ENCODE measurements at regions of chr2 and their contacts with region 1.

Region 1: GRCh38 chr2:20411361-20411894 is 35.4 kb upstream of the RHOB start:
- DNase-seq: peak; percentile 77
- ATAC-seq: peak; percentile 100
- H3K4me3 ChIP-seq: no peak overlapping the region
- H3K27ac ChIP-seq: no peak overlapping the region
- H3K4me1 ChIP-seq: no peaks in the 10 kb centered on the region
- H3K27me3 ChIP-seq: no peaks in the 10 kb centered on the region; the same call in 1 of the 2 replicates
- CTCF ChIP-seq: peak; percentile 84
- POLR2A ChIP-seq: no peak
- RAD21 ChIP-seq: peak; percentile 85

Region 2: DNA sequence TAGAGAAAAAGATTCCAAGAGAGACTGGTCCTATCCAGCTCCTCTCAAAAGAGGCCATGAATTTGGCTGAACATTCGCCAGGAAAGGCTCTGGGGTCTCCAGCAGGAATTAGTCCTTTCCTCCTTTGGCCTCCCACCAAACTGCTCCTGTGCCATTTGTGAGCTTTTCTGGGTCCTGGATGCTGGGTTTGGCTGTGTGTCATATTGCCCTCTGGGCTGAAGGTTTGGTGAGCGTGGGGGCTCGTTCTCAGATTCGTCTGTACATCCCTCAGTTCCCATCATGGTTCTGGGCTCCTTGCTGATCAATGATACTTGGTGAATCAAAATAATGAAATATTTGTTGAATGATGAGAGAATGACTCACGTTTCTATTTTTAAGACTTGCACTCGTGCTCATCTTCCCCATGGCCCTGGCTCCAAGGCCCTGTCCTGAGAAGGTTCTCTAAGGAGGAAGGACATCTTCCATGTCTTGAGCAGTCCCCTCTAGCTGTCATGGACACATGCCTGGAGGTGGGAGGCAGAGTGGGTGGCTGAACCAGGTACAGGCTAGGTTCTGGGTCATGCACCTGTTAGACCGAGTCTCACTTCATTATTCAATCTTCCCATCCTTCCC is 12.4 kb before region 1 on chr2:
- CTCF ChIA-PET with region 1: interaction called, 16 read pairs
- POLR2A ChIA-PET with region 1: no interaction called
- dilution Hi-C with region 1: no loop called
- in situ Hi-C with region 1: no loop called
- intact Hi-C with region 1: no loop called
- DNase-seq: peak; percentile 68
- ATAC-seq: peak; percentile 63
- H3K4me3 ChIP-seq: no peak overlapping the region
- H3K27ac ChIP-seq: no peak overlapping the region
- H3K4me1 ChIP-seq: peaks cover 4% of the 10 kb centered on the region
- H3K27me3 ChIP-seq: peaks cover 7% of the 10 kb centered on the region; the same call in 1 of the 2 replicates
- CTCF ChIP-seq: no peak
- POLR2A ChIP-seq: no peak
- RAD21 ChIP-seq: no peak

Region 3: DNA sequence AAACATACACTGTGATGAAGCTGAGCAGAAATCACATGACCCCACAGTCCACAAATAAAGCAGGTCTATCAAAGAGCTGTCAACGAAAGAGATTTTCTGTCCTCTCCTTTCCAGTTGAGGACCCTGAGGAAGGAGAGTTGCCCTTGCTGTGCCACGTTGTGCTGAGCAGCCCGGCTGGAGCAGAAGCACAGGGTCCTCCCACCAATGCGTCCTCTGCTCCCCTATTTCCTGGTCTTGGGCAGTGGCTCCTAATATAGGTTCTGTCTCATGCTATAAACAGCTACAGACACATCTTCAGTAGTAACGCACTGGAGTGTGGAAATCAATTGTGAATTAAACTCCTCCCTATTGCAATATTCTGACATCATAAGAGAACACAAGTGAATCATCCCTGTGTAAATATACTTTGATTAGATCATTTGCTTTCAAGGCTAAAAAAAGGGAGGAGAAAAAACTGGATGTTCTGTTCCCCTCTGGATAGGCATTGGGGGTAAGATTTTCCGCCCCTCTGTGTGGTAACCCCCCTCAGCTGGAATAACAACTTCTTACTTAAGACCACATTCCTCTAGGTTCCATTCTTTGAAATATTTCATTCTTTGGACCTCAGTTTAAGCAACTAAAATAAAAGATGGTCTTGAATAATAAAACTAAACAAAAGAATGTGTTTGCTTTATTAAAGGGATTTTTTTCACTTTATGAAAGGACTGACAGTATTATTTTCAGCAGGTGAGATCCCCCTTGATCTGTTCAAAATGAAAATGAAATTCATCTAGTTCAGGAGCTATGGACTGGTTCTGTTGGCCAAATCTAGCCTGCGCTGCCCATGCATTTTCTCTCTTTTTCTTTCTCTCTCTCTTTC is 27.1 kb after region 1 on chr2:
- CTCF ChIA-PET with region 1: interaction called, 18 read pairs
- POLR2A ChIA-PET with region 1: no interaction called
- dilution Hi-C with region 1: no loop called
- in situ Hi-C with region 1: no loop called
- intact Hi-C with region 1: loop called (anchors 1 kb)
- DNase-seq: peak; percentile 94
- ATAC-seq: peak; percentile 79
- H3K4me3 ChIP-seq: no peak overlapping the region
- H3K27ac ChIP-seq: peak overlapping the region; percentile 26
- H3K4me1 ChIP-seq: peaks cover 5% of the 10 kb centered on the region
- H3K27me3 ChIP-seq: no peaks in the 10 kb centered on the region
- CTCF ChIP-seq: no peak
- POLR2A ChIP-seq: no peak; the same call in 1 of the 2 replicates
- RAD21 ChIP-seq: 0 out of 2 replicates have a peak, but pooled peaks have one; percentile 10

Region 4: DNA sequence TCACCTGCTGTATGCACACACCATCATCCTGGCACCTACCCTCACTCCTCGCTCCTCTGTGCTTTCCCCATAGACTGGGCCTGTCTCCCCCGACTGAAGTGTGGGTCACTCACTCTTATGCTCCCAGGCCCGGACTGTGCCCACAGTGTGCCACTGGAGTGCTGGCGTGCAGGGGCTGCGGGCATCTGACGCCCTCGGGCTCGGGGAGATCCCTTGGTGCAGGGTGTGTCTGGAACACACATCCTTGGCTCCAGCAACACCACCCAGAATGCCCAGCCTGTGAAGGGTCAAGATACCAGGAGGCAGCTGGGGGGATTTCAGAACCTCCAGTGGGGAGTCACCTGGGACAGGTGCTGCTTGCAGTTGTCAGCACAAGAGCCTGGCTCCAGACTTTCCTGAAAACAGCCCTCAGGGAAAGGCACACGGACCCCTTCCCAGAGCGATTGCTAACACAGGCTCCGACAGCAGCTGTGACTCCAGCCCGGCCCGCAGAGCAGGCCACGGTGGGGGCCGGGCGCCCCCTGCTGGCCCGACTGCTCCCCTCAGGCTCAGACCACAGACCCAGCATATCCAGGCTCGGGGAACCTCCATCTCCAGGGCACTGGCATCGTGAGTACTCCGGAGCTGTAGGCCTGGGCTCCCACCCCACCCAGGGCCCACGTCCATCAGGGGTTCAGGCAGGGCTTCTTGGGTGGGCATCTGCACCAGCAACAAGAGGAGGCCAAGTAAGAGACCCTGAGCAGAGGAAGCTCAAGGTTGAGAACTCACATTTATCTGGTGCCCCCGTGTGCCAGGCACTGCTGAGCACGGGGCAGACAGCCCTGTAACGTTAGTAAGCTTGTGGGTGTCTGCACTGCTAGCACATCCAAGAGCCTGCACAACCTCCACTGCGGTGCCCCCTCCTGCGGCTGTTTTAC is 230.9 kb after region 1 on chr2:
- CTCF ChIA-PET with region 1: interaction called, 12 read pairs
- POLR2A ChIA-PET with region 1: no interaction called
- dilution Hi-C with region 1: no loop called
- in situ Hi-C with region 1: no loop called
- intact Hi-C with region 1: no loop called
- DNase-seq: peak; percentile 57
- ATAC-seq: peak; percentile 98
- H3K4me3 ChIP-seq: no peak overlapping the region
- H3K27ac ChIP-seq: no peak overlapping the region
- H3K4me1 ChIP-seq: no peaks in the 10 kb centered on the region
- H3K27me3 ChIP-seq: no peaks in the 10 kb centered on the region
- CTCF ChIP-seq: peak; percentile 96
- POLR2A ChIP-seq: peak; percentile 45; the same call in 1 of the 2 replicates
- RAD21 ChIP-seq: peak; percentile 95

Measured in IMR-90 (cell line).